ENCODE measurements at regions of chr6 and their contacts with region 1.

Region 1: DNA sequence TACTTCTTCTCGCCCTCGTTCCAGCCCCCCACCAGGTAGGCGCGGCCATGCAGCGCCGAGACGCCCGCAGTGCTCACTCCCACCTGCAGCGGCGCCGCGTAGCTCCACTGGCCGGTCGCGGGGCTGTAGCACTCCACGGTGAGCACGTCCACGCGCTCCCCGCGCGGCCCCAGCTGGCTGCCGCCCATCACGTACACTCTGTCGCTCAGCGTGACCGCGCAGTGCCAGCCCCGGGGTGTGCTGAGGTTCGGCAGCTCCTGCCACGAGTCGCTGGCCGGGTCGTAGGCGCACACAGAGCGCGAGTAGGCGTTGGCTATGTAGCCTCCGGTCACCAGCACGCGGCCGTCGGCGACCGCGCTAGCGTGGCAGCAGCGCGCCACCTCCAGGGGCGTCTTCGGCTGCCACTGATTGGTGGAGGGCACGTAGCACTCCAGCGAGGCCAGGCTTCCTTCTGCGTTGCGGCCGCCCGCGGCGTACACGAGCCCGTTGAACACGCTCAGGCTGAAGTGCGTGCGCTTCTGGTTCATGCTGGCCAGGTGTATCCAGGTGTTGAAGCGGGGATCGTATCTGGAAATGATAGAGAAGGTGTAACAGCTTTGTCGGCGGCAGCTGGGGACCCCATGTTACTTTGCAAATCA is 13.7 kb downstream of the KLHL31 start:
- DNase-seq: peak; percentile 87 to 93 (median 90)
- ATAC-seq: peak; percentile 96
- H3K4me3 ChIP-seq: peak overlapping the region; percentile 34 to 39
- H3K27ac ChIP-seq: peak overlapping the region; percentile 78 to 97 (median 89)
- H3K4me1 ChIP-seq: peaks cover 14% of the 10 kb centered on the region
- H3K27me3 ChIP-seq: no peaks in the 10 kb centered on the region
- CTCF ChIP-seq: peak; percentile 9 to 65 (median 51)
- POLR2A ChIP-seq: peak; percentile 65 to 87 (median 83)

Region 2: DNA sequence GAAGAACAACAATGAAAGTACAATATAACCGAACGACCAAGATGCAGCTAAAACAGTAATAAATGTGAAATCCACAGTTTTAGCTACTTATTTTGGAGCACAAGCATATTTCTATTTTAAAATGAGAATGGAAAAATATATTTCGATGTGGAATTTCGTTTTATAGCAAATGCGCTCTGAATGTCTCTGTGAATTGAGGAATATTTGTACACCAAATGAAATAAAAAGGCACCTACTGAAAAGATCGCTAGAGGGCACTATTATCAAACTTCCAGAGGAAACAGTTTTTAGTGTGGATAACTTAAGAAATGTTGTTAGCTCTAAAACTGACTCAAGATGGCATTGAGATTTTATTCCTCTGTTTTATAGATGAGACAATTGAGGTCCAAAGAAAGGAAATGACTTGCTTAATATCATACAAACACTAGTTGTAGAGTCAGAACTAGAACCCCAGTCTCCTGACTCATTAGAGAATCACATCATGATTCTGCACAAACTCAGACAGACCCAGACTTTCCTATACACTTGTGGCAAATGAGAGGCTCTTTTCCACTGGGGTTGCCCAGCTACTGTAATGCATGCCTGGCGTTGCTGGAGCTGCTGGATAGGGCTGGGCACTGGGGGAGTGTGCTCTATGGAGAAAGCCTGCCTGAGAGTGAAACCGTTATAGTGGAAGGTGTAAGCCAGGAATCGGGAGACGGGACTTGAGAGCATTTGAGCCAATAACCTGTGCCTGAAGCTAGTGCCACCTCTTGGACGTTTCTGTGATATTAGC is 158.8 kb before region 1 on chr6:
- intact Hi-C with region 1: no loop called
- DNase-seq: peak in 2 of 4 donors; percentile 27 to 33
- ATAC-seq: peak; percentile 77
- H3K4me3 ChIP-seq: no peak overlapping the region
- H3K27ac ChIP-seq: no peak overlapping the region
- H3K4me1 ChIP-seq: peaks cover 21% of the 10 kb centered on the region
- H3K27me3 ChIP-seq: no peaks in the 10 kb centered on the region
- CTCF ChIP-seq: peak; percentile 47 to 85 (median 77)
- POLR2A ChIP-seq: no peak

Region 3: DNA sequence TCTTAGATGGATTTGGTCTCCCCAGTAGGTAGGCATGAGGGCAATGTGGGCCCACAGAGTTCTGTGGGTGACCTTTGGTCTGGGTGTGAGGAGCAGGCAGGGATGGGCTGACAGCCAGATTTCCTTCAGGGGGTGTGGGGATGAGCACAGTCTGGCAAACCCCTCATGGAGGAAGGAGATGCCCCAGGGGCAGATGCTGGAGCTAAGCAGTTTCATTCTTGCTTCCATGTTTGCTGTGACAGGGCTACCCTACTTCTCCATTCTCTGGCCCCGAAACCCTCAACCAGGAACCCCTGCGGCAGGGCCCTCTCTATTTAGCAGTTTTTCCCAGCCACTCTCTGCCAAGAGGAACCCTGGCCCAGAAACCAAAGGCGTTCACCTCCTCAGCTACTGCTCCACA is 147.4 kb before region 1 on chr6:
- intact Hi-C with region 1: loop called (anchors 10 kb)
- DNase-seq: no peak
- ATAC-seq: no peak
- H3K4me3 ChIP-seq: no peak overlapping the region
- H3K27ac ChIP-seq: no peak overlapping the region
- H3K4me1 ChIP-seq: no peaks in the 10 kb centered on the region
- H3K27me3 ChIP-seq: no peaks in the 10 kb centered on the region
- CTCF ChIP-seq: no peak
- POLR2A ChIP-seq: no peak

Region 4: DNA sequence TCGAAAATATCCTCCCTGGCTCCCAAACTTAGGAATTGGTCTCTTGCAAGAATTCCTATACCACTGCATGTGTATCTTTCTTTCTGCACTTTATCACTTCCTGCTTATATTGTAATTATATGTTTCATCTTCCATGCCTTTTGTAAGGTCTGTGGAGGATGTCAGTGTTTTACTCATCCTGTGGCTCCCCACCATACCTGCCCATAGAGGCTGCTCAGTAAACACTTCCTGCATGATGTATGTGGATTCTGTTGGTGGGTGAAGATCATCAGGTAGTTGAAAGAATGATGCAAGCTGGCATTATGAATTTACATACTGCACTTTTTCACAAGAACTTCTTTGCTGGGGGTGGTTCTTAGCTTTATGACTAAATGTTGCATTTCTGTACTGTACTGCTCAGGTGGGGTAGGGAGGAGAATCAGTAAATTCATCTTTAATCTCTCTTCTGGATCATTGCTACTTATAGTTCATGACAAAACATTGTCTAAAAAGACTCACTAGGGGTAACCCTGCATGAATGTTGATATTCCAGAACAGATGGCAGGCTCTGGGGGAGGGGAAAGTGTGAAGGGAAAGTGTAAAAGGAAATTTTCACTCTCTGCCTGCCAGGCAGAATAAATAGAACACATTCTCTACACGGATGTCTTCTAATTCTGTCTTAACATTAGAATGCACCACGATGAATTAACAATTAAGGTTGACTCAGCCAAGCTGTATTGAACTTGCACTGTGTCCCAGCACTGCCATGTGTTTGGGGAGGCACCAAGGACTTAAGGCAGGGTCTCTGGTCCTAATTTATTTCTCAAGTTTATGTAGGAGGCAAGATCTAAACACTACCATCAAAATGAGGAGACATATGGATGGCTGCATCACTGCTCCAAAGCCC is 49.7 kb after region 1 on chr6:
- intact Hi-C with region 1: loop called (anchors 10 kb)
- DNase-seq: no peak
- ATAC-seq: no peak
- H3K4me3 ChIP-seq: no peak overlapping the region
- H3K27ac ChIP-seq: no peak overlapping the region
- H3K4me1 ChIP-seq: no peaks in the 10 kb centered on the region
- H3K27me3 ChIP-seq: no peaks in the 10 kb centered on the region
- CTCF ChIP-seq: no peak
- POLR2A ChIP-seq: no peak

Region 5: DNA sequence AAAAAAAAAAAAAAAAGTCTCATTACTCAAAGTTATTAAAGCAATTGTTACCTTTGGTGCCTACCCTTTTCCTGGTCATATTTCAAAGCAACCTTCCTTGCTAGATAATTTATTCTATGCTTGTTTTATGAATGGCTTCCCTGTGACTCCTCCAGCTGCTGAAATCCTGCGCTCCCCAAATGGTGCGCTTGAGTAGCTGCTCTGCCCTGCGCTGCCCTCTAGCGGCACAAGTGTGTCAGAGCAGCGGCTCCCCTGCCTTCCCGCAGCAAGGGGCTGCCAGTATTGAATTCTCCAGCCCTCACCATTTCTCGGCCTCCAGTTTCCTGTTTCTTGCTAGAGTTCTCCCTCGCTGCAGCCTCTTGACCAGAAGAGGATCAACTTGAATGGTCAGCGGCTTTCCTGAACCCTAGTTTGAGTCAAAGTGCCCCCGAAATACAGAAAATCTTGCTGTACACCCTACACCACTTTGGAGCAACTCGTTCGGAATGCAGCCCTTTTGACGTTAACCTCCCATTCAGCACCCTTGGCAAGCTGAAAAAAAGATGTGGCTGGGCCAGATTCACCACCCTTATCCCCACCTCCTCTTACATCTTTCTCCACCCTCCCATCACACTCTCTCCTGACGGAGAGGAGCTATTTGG is 74.0 kb after region 1 on chr6:
- intact Hi-C with region 1: no loop called
- DNase-seq: peak; percentile 81 to 86 (median 82)
- ATAC-seq: peak; percentile 87
- H3K4me3 ChIP-seq: no peak overlapping the region
- H3K27ac ChIP-seq: no peak overlapping the region
- H3K4me1 ChIP-seq: peaks cover 11% of the 10 kb centered on the region
- H3K27me3 ChIP-seq: no peaks in the 10 kb centered on the region
- CTCF ChIP-seq: peak; percentile 87 to 97 (median 92)
- POLR2A ChIP-seq: no peak

Measured in body of pancreas (tissue), 4 donors.